H1 (cell line): ENCODE measurements at regions of chr6 and their contacts with region 1.

Region 1: GRCh38 chr6:12504319-12504966 is 212.1 kb upstream of the PHACTR1 start:
- DNase-seq: no peak
- H3K4me3 ChIP-seq: no peak overlapping the region
- H3K27ac ChIP-seq: no peak overlapping the region
- H3K4me1 ChIP-seq: no peaks in the 10 kb centered on the region
- H3K27me3 ChIP-seq: no peaks in the 10 kb centered on the region
- CTCF ChIP-seq: peak; percentile 30 to 84 (median 70)
- EP300 ChIP-seq: no peak
- POLR2A ChIP-seq: no peak
- RAD21 ChIP-seq: peak; percentile 74 to 80

Region 2: DNA sequence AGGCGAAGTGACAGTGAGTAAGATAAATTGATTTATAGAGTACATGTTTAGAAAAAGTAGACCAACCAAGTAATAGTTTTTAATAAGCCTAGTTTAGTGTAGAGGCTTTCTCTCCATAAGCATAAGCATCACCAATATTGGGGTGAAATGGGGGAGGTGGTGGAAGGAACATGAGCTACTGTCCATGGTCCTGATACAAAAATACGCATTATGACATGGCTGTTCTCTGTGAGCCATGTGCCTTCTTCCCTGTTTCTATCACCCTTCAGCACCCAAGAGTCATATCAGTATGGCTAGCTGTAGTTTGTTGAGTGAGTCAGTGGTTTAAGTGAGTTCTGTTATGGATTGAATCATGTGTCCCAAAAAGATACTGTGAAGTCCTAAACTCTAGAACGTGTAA is 63.5 kb before region 1 on chr6:
- CTCF ChIA-PET with region 1: interaction called, 12 read pairs
- POLR2A ChIA-PET with region 1: no interaction called
- DNase-seq: no peak
- H3K4me3 ChIP-seq: no peak overlapping the region
- H3K27ac ChIP-seq: no peak overlapping the region
- H3K4me1 ChIP-seq: no peaks in the 10 kb centered on the region; a peak in 1 of 7 replicates
- H3K27me3 ChIP-seq: no peaks in the 10 kb centered on the region
- CTCF ChIP-seq: no peak
- EP300 ChIP-seq: no peak
- POLR2A ChIP-seq: no peak
- RAD21 ChIP-seq: no peak

Region 3: DNA sequence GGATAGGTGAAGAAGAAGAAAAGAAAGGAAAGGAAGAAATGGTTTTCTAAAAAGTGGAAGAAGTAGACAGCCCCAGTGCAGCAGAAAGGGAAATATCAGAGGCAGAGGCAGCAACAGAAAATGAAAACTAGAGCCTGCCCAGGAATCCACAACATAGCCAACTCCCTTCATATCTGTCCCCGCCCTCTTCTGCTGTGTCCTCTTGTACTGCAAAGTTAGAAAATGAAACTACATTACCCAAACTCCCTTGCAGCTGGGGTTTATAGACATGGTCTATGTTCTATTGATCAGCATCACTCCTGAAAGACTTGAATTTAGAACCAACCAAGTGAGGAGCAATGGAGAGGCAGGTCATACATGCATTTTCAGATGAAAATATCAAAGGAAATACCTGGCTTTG is 11.6 kb after region 1 on chr6:
- CTCF ChIA-PET with region 1: interaction called, 10 read pairs
- POLR2A ChIA-PET with region 1: no interaction called
- DNase-seq: no peak
- H3K4me3 ChIP-seq: no peak overlapping the region
- H3K27ac ChIP-seq: no peak overlapping the region
- H3K4me1 ChIP-seq: no peaks in the 10 kb centered on the region
- H3K27me3 ChIP-seq: no peaks in the 10 kb centered on the region
- CTCF ChIP-seq: no peak
- EP300 ChIP-seq: no peak
- POLR2A ChIP-seq: no peak
- RAD21 ChIP-seq: no peak